ENCODE measurements at regions of chr12 and their contacts with region 1.

Region 1: GRCh38 chr12:65313719-65314317 is 35.3 kb downstream of the MSRB3 start:
- DNase-seq: no peak
- H3K4me3 ChIP-seq: no peak overlapping the region
- H3K27ac ChIP-seq: no peak overlapping the region
- H3K27me3 ChIP-seq: peaks cover 0 to 7% (median 0%) of the 10 kb centered on the region in 45 donors
- CTCF ChIP-seq: peak in 55 of 56 donors; percentile 22 to 76 (median 49)

Region 2: DNA sequence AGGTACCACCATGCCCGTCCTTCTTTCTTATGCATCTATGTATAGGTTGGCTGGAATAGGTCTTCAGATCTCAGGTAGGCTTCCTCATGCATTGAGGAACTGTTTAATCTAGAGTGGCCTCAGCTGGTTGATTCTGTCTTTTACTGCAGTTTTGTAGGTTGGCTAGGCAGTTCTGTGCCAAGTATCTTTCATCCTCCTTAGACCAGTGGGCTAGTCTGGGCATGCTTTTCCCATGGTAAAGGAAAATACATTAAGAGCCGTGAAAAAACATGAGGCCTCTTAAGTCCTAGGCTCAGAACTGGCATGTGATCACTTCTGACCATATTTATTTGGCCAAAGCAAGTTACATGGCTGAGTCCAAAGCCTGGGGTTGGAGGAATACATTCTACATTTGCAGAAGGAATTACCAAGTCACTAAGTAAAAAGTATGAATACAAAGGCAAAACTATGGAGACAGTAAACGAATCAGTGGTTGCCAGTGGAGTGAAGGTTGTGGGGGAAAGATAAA is 330.0 kb before region 1 on chr12:
- intact Hi-C with region 1: no loop called
- DNase-seq: no peak
- H3K4me3 ChIP-seq: no peak overlapping the region
- H3K27ac ChIP-seq: no peak overlapping the region
- H3K27me3 ChIP-seq: peaks cover 0 to 3% (median 0%) of the 10 kb centered on the region in 45 donors
- CTCF ChIP-seq: no peak

Region 3: DNA sequence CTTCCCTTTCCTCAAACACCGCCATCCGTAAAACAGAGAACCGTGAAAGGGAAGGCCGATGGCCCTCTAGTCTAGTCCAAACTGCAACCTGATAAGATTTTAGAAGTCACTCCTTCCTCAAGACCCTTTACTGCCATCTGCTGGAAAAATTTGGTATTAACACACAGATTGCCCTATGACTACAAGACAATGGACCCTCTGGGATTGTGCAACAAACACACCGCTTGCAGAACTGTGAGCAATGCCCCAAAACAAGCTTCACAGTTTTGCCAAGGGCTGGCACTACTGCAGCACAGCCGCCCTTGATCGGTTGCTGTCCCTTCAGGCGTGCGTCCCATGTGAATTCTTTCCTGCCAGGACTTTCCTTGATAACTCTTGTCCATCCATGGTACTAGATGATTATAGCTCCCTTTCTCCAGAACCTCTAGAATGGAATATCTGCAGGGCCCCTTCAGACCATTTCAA is 793.7 kb after region 1 on chr12:
- intact Hi-C with region 1: loop called in 1 of 2 experiments (anchors 10 kb)
- DNase-seq: peak in 3 of 10 donors; percentile 10 to 27 (median 13)
- H3K4me3 ChIP-seq: no peak overlapping the region
- H3K27ac ChIP-seq: no peak overlapping the region
- H3K27me3 ChIP-seq: peaks cover 0 to 23% (median 0%) of the 10 kb centered on the region in 45 donors
- CTCF ChIP-seq: peak; percentile 50 to 92 (median 81)

Measured in dorsolateral prefrontal cortex (tissue), 120 donors.